ENCODE measurements at regions of chr12 and their contacts with region 1.

Region 1: DNA sequence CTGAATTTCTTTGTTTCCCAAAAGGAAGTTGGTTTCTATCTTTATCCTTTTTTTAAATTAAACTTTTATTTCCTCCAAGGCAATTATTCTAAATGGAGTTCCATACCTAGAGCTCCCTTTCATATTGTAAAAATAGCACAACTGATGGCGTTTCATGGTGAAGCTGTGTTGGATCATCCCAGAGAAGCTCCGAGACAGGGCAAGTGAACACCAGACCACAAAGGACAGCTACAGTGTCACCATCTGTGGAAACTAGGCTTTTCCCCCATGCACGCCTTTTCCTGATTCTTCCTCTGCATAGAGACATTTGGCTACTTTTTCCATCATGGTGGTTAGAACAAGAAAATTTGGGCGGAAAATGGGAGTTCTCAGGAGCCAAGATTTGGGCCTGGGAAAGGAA is 12.7 kb downstream of the TPCN1 start:
- DNase-seq: no peak
- H3K4me3 ChIP-seq: no peak overlapping the region
- H3K27ac ChIP-seq: no peak overlapping the region
- H3K4me1 ChIP-seq: peaks cover 54% of the 10 kb centered on the region
- H3K27me3 ChIP-seq: no peaks in the 10 kb centered on the region
- CTCF ChIP-seq: no peak
- POLR2A ChIP-seq: no peak

Region 2: GRCh38 chr12:113261847-113262470 is 28.0 kb after region 1 on chr12:
- intact Hi-C with region 1: loop called (anchors 1 kb)
- DNase-seq: no peak
- H3K4me3 ChIP-seq: no peak overlapping the region
- H3K27ac ChIP-seq: peak overlapping the region; percentile 17
- H3K4me1 ChIP-seq: peaks cover 44% of the 10 kb centered on the region
- H3K27me3 ChIP-seq: no peaks in the 10 kb centered on the region
- CTCF ChIP-seq: no peak
- POLR2A ChIP-seq: no peak